ENCODE measurements at regions of chr9 and their contacts with region 1.

Region 1: GRCh38 chr9:136686794-136687711 is at the start of gene AGPAT2:
- DNase-seq: peak; percentile 93
- total RNA-seq, gene AGPAT2: 27.1 to 28.8 TPM

Region 2: GRCh38 chr9:136605988-136606660 is 80.9 kb before region 1 on chr9:
- intact Hi-C with region 1: no loop called
- DNase-seq: no peak

Region 3: GRCh38 chr9:136722969-136723356 is 35.9 kb after region 1 on chr9:
- intact Hi-C with region 1: loop called in 1 of 2 experiments (anchors 1 kb)
- DNase-seq: no peak

Region 4: DNA sequence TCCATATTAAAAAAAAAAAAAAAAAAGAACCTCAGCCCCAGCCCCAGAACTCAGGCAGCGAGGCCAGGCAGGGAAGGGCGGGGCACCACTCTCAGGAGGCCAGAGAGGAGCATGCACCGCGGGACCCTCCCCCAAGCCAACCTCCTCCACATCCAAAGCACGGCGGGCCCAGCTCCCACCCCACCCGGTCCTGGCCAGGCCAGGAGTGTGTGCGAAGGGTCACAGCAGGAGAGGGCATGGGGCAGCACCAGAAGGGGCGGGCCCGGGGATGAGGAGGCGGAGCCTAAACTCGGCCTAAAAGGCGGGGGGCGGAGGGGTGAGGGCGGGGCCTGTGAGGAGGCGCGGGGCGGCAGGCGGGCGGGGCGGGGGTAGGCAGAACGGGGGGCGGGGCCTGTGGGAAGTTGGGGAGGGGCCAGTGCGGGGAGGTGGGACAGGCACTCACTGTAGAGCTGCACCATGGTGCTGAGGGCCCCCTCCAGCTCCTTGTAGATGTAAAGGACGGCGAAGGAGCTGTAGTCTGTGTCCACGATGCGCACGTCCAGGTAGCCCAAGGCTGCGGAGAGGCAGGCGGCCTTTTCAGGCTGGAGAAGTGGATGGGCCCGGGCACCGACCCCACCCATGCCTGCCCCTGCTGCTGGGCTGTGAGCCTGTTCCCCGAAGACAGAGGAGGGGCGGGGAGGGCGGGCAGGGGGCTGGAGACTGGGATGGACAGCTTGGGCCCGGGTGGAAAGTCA is 76.0 kb after region 1 on chr9:
- intact Hi-C with region 1: no loop called
- DNase-seq: peak; percentile 81